ENCODE measurements at regions of chr13 and their contacts with region 1.

Region 1: DNA sequence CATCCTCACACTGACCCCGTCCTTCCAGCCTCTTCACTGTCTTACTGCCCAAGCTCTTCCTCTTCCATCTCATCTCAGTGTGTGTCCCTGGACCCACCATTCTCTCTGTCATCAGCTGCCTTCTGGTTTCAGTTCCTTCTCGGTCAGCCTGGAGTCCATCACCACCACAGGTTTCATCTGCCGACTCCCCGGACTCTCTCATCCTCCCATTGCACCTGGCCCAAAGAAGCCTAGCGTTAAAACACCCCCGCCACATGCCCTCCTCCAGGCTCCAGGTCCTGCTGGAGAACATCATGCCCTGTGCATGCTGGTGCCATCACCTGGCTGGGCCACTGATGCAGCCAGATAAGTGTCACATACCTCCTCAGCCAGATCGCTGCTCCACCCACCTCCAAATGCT is 122.1 kb upstream of the GPR12 start:
- DNase-seq: no peak
- ATAC-seq: no peak
- H3K4me3 ChIP-seq: no peak overlapping the region
- H3K27ac ChIP-seq: no peak overlapping the region
- H3K4me1 ChIP-seq: peaks cover 0 to 3% (median 0%) of the 10 kb centered on the region in 12 donors
- H3K27me3 ChIP-seq: peaks cover 0 to 33% (median 2%) of the 10 kb centered on the region in 9 donors
- CTCF ChIP-seq: no peak
- POLR2A ChIP-seq: no peak

Region 2: DNA sequence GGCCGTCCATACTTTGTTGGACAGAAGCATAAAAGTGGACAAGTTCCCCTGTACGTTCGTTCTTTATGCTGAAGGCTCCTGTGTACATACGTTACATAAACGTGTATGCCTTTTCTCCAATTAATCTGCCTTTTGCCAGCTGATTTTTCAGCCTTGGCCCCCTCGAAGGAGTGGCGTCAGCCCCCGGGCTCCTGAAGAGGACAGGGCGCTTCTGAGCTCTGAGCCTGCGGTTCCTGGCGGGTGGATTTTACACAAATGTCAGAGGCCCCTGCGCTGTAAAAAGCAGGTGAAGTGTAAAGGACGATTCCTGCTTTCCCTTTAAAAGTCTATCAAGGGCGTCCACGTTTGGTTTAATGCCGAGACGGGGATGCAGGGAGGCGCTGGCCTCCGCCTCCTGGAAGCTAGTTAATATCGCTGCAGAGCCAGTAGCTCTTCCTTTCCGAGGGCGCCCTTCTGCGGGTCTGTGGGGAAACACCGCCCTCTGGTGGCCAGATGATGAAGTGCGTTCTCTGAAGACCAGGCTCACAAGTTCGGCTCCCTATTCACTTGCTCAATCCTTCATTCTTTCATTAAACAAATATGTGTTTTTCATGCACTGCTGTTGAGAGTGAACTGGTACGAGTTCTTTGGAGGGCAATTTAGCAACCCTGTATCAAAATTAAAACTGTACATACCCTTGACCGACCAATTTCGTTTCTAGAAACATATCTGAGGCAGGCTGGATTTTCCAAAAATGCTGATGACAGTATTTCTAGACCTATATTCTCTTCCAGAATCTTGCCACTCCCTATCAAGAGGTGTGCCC is 184.1 kb before region 1 on chr13:
- intact Hi-C with region 1: no loop called
- DNase-seq: peak; percentile 66 to 85 (median 74)
- ATAC-seq: peak; percentile 62 to 91 (median 83)
- H3K4me3 ChIP-seq: peak overlapping the region in 8 of 12 donors; percentile 12 to 46 (median 28)
- H3K27ac ChIP-seq: no peak overlapping the region
- H3K4me1 ChIP-seq: peaks cover 0 to 7% (median 0%) of the 10 kb centered on the region in 12 donors
- H3K27me3 ChIP-seq: no peaks in the 10 kb centered on the region
- CTCF ChIP-seq: peak; percentile 92 to 99 (median 98)
- POLR2A ChIP-seq: no peak

Region 3: GRCh38 chr13:26864576-26864975 is 18.2 kb before region 1 on chr13:
- intact Hi-C with region 1: loop called in 1 of 10 experiments (anchors 1 kb)
- DNase-seq: no peak
- ATAC-seq: no peak
- H3K4me3 ChIP-seq: no peak overlapping the region
- H3K27ac ChIP-seq: no peak overlapping the region
- H3K4me1 ChIP-seq: no peaks in the 10 kb centered on the region
- H3K27me3 ChIP-seq: peaks cover 0 to 26% (median 0%) of the 10 kb centered on the region in 9 donors
- CTCF ChIP-seq: no peak
- POLR2A ChIP-seq: no peak

Region 4: GRCh38 chr13:27132538-27132937 is 249.8 kb after region 1 on chr13:
- intact Hi-C with region 1: no loop called
- DNase-seq: no peak
- ATAC-seq: no peak
- H3K4me3 ChIP-seq: no peak overlapping the region
- H3K27ac ChIP-seq: no peak overlapping the region
- H3K4me1 ChIP-seq: peaks cover 0 to 41% (median 14%) of the 10 kb centered on the region in 12 donors
- H3K27me3 ChIP-seq: no peaks in the 10 kb centered on the region
- CTCF ChIP-seq: no peak
- POLR2A ChIP-seq: no peak

Measured in heart left ventricle (tissue), 16 donors.